ENCODE measurements at regions of chr3 and their contacts with region 1.

Region 1: GRCh38 chr3:122146466-122146865 is 37.0 kb upstream of the CASR start:
- DNase-seq: peak; percentile 88
- ATAC-seq: peak; percentile 99
- H3K4me3 Mint-ChIP-seq: no peak overlapping the region
- H3K27ac Mint-ChIP-seq: peak overlapping the region; percentile 83
- H3K4me1 Mint-ChIP-seq: peaks cover 32% of the 10 kb centered on the region
- H3K27me3 Mint-ChIP-seq: peaks cover 2% of the 10 kb centered on the region

Region 2: DNA sequence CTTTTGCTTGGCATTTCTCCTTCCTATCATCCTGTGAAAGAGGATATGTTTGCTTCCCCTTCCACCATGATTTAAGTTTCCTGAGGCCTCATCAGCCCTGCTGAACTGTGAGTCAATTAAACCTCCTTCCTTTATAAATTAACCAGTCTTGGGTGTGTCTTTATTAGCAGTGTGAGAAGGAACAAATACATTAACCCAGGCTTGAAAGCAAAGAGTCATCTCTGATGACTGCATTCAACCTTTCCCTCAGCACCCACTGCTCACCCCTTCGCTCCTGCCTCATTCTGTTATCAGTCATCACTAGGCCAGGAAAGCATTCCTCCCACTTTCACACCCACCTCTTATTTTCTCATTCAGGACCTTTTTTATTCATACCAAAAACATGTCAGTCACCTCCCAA is 22.6 kb before region 1 on chr3:
- CTCF ChIA-PET with region 1: interaction called, 3 read pairs
- POLR2A ChIA-PET with region 1: no interaction called
- intact Hi-C with region 1: loop called in 1 of 2 experiments (anchors 2 kb)
- DNase-seq: peak; percentile 29
- ATAC-seq: peak; percentile 93
- H3K4me3 Mint-ChIP-seq: no peak overlapping the region
- H3K27ac Mint-ChIP-seq: peak overlapping the region; percentile 64
- H3K4me1 Mint-ChIP-seq: peaks cover 11% of the 10 kb centered on the region
- H3K27me3 Mint-ChIP-seq: peaks cover 22% of the 10 kb centered on the region

Region 3: GRCh38 chr3:122245513-122246174 is 99.2 kb after region 1 on chr3:
- CTCF ChIA-PET with region 1: interaction called, 3 read pairs
- POLR2A ChIA-PET with region 1: no interaction called
- intact Hi-C with region 1: loop called in 1 of 2 experiments (anchors 2 kb)
- DNase-seq: no peak
- ATAC-seq: peak; percentile 85
- H3K4me3 Mint-ChIP-seq: peak overlapping the region; percentile 51
- H3K27ac Mint-ChIP-seq: peak overlapping the region; percentile 75
- H3K4me1 Mint-ChIP-seq: peaks cover 23% of the 10 kb centered on the region
- H3K27me3 Mint-ChIP-seq: peaks cover 11% of the 10 kb centered on the region

Region 4: DNA sequence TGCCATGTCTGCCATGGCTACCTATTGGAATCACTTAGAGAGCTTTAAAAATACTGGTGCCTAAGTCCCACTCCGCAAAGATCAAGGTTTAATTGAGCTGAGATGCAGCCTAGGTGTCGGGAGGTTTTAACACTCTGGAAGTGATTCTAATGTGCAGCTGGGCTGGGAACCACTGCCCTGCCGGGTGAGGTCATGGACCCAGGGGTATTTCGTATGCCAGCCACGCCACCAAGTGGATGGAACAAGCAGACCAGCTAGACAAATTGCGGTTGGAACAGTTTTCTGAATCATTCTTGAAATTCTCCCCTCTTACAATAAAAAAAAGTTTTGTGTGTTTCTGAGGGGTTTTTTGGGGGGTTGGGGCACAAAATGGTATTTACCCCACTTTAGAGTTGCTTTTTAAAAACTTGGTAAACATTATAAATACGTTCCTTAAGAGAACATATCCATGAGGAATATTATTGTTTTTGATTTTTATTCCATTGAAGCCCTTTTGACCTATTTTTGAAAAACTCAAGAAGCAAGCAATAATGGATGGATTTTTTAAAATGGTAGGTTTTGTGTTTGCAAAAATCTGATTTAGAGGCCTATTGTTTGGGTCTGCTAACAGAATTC is 112.4 kb after region 1 on chr3:
- CTCF ChIA-PET with region 1: interaction called, 5 read pairs
- POLR2A ChIA-PET with region 1: no interaction called
- intact Hi-C with region 1: loop called (anchors 1 kb)
- DNase-seq: peak; percentile 83
- ATAC-seq: peak; percentile 92
- H3K4me3 Mint-ChIP-seq: no peak overlapping the region
- H3K27ac Mint-ChIP-seq: no peak overlapping the region
- H3K4me1 Mint-ChIP-seq: peaks cover 18% of the 10 kb centered on the region
- H3K27me3 Mint-ChIP-seq: no peaks in the 10 kb centered on the region

Region 5: GRCh38 chr3:122299872-122300460 is 153.5 kb after region 1 on chr3:
- CTCF ChIA-PET with region 1: no interaction called
- POLR2A ChIA-PET with region 1: no interaction called
- intact Hi-C with region 1: loop called in 1 of 2 experiments (anchors 1 kb)
- DNase-seq: peak; percentile 53
- ATAC-seq: peak; percentile 59
- H3K4me3 Mint-ChIP-seq: no peak overlapping the region
- H3K27ac Mint-ChIP-seq: no peak overlapping the region
- H3K4me1 Mint-ChIP-seq: peaks cover 18% of the 10 kb centered on the region
- H3K27me3 Mint-ChIP-seq: no peaks in the 10 kb centered on the region

Region 6: GRCh38 chr3:122365073-122365472 is 218.6 kb after region 1 on chr3:
- CTCF ChIA-PET with region 1: no interaction called
- POLR2A ChIA-PET with region 1: no interaction called
- intact Hi-C with region 1: loop called in 1 of 2 experiments (anchors 1 kb)
- DNase-seq: no peak
- ATAC-seq: peak; percentile 73
- H3K4me3 Mint-ChIP-seq: no peak overlapping the region
- H3K27ac Mint-ChIP-seq: peak overlapping the region; percentile 93
- H3K4me1 Mint-ChIP-seq: peaks cover 34% of the 10 kb centered on the region
- H3K27me3 Mint-ChIP-seq: no peaks in the 10 kb centered on the region

Region 7: GRCh38 chr3:122576174-122576940 is 429.9 kb after region 1 on chr3:
- CTCF ChIA-PET with region 1: no interaction called
- POLR2A ChIA-PET with region 1: no interaction called
- intact Hi-C with region 1: loop called in 1 of 2 experiments (anchors 5 kb)
- DNase-seq: peak; percentile 78
- ATAC-seq: peak; percentile 90
- H3K4me3 Mint-ChIP-seq: peak overlapping the region; percentile 24
- H3K27ac Mint-ChIP-seq: peak overlapping the region; percentile 87
- H3K4me1 Mint-ChIP-seq: peaks cover 58% of the 10 kb centered on the region
- H3K27me3 Mint-ChIP-seq: no peaks in the 10 kb centered on the region

Region 8: GRCh38 chr3:122975163-122975923 is 828.9 kb after region 1 on chr3:
- CTCF ChIA-PET with region 1: no interaction called
- POLR2A ChIA-PET with region 1: no interaction called
- intact Hi-C with region 1: no loop called
- DNase-seq: peak; percentile 15
- ATAC-seq: peak; percentile 59
- H3K4me3 Mint-ChIP-seq: no peak overlapping the region
- H3K27ac Mint-ChIP-seq: no peak overlapping the region
- H3K4me1 Mint-ChIP-seq: peaks cover 15% of the 10 kb centered on the region
- H3K27me3 Mint-ChIP-seq: peaks cover 4% of the 10 kb centered on the region

Measured in activated CD4-positive, alpha-beta T cell treated with anti-CD3 and anti-CD28 coated beads for 36 hours (primary cell).